Heart left ventricle (tissue), 16 donors: ENCODE measurements at regions of chr3 and their contacts with region 1.

Region 1: DNA sequence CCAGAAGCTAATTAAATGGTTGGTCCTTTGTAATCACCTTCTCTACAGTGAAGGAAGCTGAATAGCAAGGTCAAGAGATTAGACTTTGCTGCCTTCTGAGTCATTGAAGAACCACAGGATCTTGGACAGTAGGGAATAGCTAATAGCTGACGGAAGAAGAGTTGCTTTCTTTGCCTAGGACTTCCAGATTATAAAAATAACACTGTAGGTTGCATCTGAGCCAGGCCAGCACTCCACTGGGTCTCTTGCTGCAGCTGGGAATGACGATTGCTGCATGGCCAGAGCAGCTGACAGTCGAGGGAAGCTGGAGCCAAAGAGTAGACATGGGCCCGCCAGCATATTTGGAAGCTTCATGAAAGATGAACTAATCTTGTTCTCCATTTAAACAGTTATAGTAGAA is 81.5 kb upstream of the KCNMB2 start:
- DNase-seq: peak; percentile 70 to 82 (median 80)
- ATAC-seq: peak; percentile 93 to 98 (median 96)
- H3K4me3 ChIP-seq: no peak overlapping the region
- H3K27ac ChIP-seq: peak overlapping the region in 10 of 12 donors; percentile 21 to 76 (median 59)
- H3K4me1 ChIP-seq: peaks cover 0 to 32% (median 16%) of the 10 kb centered on the region in 12 donors
- H3K27me3 ChIP-seq: no peaks in the 10 kb centered on the region
- CTCF ChIP-seq: no peak
- POLR2A ChIP-seq: no peak

Region 2: GRCh38 chr3:178536211-178537079 is 81.7 kb after region 1 on chr3 and contains the start of gene KCNMB2:
- intact Hi-C with region 1: loop called in 1 of 10 experiments (anchors 10 kb)
- DNase-seq: no peak
- ATAC-seq: peak; percentile 71 to 88 (median 84)
- H3K4me3 ChIP-seq: peak within 1 kb of the TSS; percentile 38 to 64 (median 52)
- H3K27ac ChIP-seq: peak within 1 kb of the TSS in 7 of 12 donors; percentile 0 to 53 (median 44)
- H3K4me1 ChIP-seq: peaks cover 0 to 6% (median 0%) of the 10 kb centered on the region in 12 donors
- H3K27me3 ChIP-seq: peaks cover 0 to 7% (median 0%) of the 10 kb centered on the region in 9 donors
- CTCF ChIP-seq: no peak
- POLR2A ChIP-seq: no peak
- total RNA-seq, gene KCNMB2: 1.3 to 5.7 (median 2.7) TPM in 8 of 9 donors, not detected in the other

Region 3: GRCh38 chr3:178785961-178786360 is 331.2 kb after region 1 on chr3:
- intact Hi-C with region 1: no loop called
- DNase-seq: no peak
- ATAC-seq: no peak
- H3K4me3 ChIP-seq: no peak overlapping the region
- H3K27ac ChIP-seq: no peak overlapping the region
- H3K4me1 ChIP-seq: no peaks in the 10 kb centered on the region
- H3K27me3 ChIP-seq: no peaks in the 10 kb centered on the region
- CTCF ChIP-seq: no peak
- POLR2A ChIP-seq: no peak

Region 4: DNA sequence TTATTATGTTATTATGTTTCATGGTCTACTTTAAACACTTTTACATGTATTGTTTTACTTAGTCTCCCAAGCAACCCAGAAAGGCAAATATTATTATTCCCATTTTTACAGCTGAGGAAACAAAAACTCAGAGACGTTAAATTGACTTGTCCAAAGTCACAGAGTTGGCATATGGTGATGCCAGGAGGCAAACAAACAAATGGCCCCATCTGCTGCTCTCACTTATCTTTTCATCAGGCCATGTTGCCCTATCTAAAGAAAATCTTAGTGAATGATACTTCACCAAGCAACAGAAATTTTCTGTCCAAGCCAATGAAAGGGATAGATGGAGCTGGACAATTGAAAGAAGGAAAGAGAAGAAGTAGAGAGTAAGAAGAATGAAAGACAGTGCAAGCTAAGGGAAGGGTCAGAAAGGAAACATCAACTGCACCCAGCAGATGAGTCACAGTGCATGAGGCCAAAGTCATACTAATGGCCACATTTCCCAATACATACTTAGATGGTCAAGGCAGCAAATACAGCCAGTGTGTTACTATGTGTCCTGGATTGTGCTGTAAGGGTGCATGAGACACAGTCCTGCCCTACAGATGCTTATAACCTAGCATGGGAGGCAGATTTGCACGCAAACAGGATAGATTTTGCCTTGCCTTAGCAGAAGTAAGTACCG is 348.4 kb after region 1 on chr3:
- intact Hi-C with region 1: no loop called
- DNase-seq: no peak
- ATAC-seq: peak in 2 of 4 donors; percentile 56 to 59
- H3K4me3 ChIP-seq: no peak overlapping the region
- H3K27ac ChIP-seq: no peak overlapping the region
- H3K4me1 ChIP-seq: no peaks in the 10 kb centered on the region
- H3K27me3 ChIP-seq: no peaks in the 10 kb centered on the region
- CTCF ChIP-seq: no peak
- POLR2A ChIP-seq: no peak